ENCODE measurements at regions of chr5 and their contacts with region 1.

Region 1: GRCh38 chr5:146059460-146060220 is 45.7 kb downstream of the PLAC8L1 start:
- DNase-seq: peak; percentile 56 to 67
- ATAC-seq: peak; percentile 81 to 94 (median 91)
- H3K4me3 ChIP-seq: peak overlapping the region; percentile 22 to 56 (median 46)
- H3K27ac ChIP-seq: peak overlapping the region; percentile 75 to 98 (median 89)
- H3K4me1 ChIP-seq: peaks cover 0 to 36% (median 8%) of the 10 kb centered on the region in 9 donors
- H3K27me3 ChIP-seq: no peaks in the 10 kb centered on the region
- CTCF ChIP-seq: peak in 2 of 9 donors; percentile 11 to 26

Region 2: DNA sequence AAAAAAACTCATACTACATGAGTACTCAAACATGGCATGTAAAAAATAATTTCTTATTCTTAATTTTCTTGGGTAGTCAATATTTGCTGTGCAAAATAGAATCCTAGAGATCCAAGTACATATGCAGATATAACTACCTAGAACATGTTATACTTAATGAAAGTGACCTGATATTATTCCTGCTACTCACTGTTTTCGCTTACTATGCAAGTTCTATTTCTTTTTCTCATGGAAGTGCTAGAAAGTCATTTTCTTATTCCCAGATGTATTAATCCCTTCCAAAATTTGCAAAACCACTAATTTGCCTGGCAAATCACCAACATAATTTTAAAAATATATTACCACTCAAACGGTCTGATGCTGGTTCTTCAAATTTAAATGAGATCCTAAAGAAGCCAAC is 64.9 kb after region 1 on chr5:
- intact Hi-C with region 1: loop called in 5 of 10 experiments (anchors 5 to 10 kb)
- DNase-seq: no peak
- ATAC-seq: no peak
- H3K4me3 ChIP-seq: no peak overlapping the region
- H3K27ac ChIP-seq: no peak overlapping the region
- H3K4me1 ChIP-seq: no peaks in the 10 kb centered on the region
- H3K27me3 ChIP-seq: no peaks in the 10 kb centered on the region
- CTCF ChIP-seq: no peak

Region 3: DNA sequence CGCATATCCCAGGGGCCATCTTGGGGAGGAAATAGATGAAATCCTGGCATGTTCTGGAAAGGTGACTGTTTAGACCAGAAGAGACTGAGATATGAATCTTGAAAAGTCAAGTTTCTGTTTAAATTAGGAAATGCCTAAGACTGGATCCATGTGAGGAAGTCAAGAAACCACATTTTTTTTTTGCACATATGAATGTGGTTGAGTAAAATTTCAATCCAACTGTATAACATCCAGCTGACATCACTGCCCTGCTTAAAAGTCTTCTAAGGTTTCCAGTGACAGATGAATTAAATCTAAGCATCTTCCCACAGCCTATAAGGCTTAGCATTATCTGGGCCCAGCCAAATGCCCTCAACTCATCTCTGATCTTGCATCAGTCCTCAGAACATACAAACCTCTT is 339.8 kb after region 1 on chr5:
- intact Hi-C with region 1: no loop called
- DNase-seq: no peak
- ATAC-seq: no peak
- H3K4me3 ChIP-seq: no peak overlapping the region
- H3K27ac ChIP-seq: no peak overlapping the region
- H3K4me1 ChIP-seq: no peaks in the 10 kb centered on the region
- H3K27me3 ChIP-seq: peaks cover 0 to 65% (median 38%) of the 10 kb centered on the region in 7 donors
- CTCF ChIP-seq: no peak